Mucosa of descending colon (tissue), 3 donors: ENCODE measurements at regions of chr19 and their contacts with region 1.

Region 1: DNA sequence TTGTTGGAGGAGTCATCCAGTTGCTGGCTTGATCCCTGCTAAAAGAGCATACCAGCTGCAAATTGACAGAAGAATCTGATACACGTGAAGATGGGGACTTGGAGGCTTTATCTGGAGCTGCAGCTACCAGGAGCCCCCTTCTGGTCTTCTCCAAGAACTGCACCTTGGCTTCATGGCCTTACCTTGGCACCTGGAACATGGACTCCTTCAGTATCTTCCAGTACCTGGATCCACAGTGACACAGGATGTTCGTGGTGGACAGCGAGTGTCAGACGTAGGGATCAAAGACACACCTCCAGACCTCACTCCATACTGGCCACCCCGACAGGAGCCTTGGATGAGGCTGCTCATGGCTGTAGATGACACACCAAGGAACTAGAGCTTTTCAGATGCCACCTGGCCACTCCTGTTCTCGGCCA is 9.9 kb upstream of the ACSBG2 start:
- DNase-seq: peak in 2 of 3 donors; percentile 54 to 79
- ATAC-seq: peak; percentile 98
- H3K4me3 ChIP-seq: no peak overlapping the region
- H3K4me1 ChIP-seq: no peaks in the 10 kb centered on the region
- CTCF ChIP-seq: peak; percentile 88

Region 2: GRCh38 chr19:6048808-6049405 is 76.7 kb before region 1 on chr19:
- intact Hi-C with region 1: loop called (anchors 2 to 5 kb)
- DNase-seq: peak; percentile 76 to 90 (median 84)
- ATAC-seq: peak; percentile 98
- H3K4me3 ChIP-seq: no peak overlapping the region
- H3K4me1 ChIP-seq: no peaks in the 10 kb centered on the region
- CTCF ChIP-seq: peak; percentile 60